ENCODE measurements at regions of chr6 and their contacts with region 1.

Region 1: GRCh38 chr6:108541838-108542759 is 18.6 kb upstream of the FOXO3 start:
- DNase-seq: peak; percentile 80
- ATAC-seq: peak; percentile 84
- H3K4me3 Mint-ChIP-seq: peak overlapping the region; percentile 26
- H3K27ac Mint-ChIP-seq: no peak overlapping the region
- H3K4me1 Mint-ChIP-seq: peaks cover 21% of the 10 kb centered on the region
- H3K27me3 Mint-ChIP-seq: peaks cover 4% of the 10 kb centered on the region

Region 2: GRCh38 chr6:108464418-108465093 is 77.5 kb before region 1 on chr6:
- CTCF ChIA-PET with region 1: no interaction called
- POLR2A ChIA-PET with region 1: no interaction called
- DNase-seq: no peak
- ATAC-seq: no peak
- H3K4me3 Mint-ChIP-seq: no peak overlapping the region
- H3K27ac Mint-ChIP-seq: no peak overlapping the region
- H3K4me1 Mint-ChIP-seq: no peaks in the 10 kb centered on the region
- H3K27me3 Mint-ChIP-seq: peaks cover 9% of the 10 kb centered on the region

Region 3: DNA sequence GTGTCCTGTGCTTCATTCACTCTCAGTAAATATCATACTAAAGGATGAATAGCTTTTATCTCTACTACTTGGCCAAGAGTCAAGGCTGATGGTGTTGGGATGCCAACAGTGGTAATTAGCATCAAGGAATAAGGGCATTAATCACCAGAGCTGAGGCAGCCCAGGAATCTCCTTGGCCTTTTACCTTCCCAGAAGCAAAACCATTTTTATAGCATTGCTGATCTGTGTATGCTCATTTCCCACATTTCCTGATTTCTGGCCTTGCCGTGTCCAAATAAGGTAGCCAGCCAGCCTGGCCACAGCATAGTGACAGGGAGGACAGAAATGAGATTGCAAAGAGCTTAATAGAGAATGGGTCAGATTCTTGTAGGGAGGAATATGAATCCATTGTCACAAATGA is 58.1 kb before region 1 on chr6:
- CTCF ChIA-PET with region 1: no interaction called
- POLR2A ChIA-PET with region 1: no interaction called
- DNase-seq: no peak
- ATAC-seq: no peak
- H3K4me3 Mint-ChIP-seq: no peak overlapping the region
- H3K27ac Mint-ChIP-seq: no peak overlapping the region
- H3K4me1 Mint-ChIP-seq: no peaks in the 10 kb centered on the region
- H3K27me3 Mint-ChIP-seq: no peaks in the 10 kb centered on the region

Region 4: GRCh38 chr6:108558372-108559096 is 16.4 kb after region 1 on chr6:
- CTCF ChIA-PET with region 1: interaction called, 14 read pairs
- POLR2A ChIA-PET with region 1: interaction called, 3 read pairs
- DNase-seq: peak; percentile 98
- ATAC-seq: peak; percentile 73
- H3K4me3 Mint-ChIP-seq: peak overlapping the region; percentile 94
- H3K27ac Mint-ChIP-seq: peak overlapping the region; percentile 96
- H3K4me1 Mint-ChIP-seq: peaks cover 29% of the 10 kb centered on the region
- H3K27me3 Mint-ChIP-seq: peaks cover 17% of the 10 kb centered on the region

Region 5: GRCh38 chr6:108592371-108593337 is 50.6 kb after region 1 on chr6:
- CTCF ChIA-PET with region 1: no interaction called
- POLR2A ChIA-PET with region 1: no interaction called
- DNase-seq: peak; percentile 84
- ATAC-seq: peak; percentile 96
- H3K4me3 Mint-ChIP-seq: no peak overlapping the region
- H3K27ac Mint-ChIP-seq: peak overlapping the region; percentile 44
- H3K4me1 Mint-ChIP-seq: peaks cover 41% of the 10 kb centered on the region
- H3K27me3 Mint-ChIP-seq: no peaks in the 10 kb centered on the region

Region 6: DNA sequence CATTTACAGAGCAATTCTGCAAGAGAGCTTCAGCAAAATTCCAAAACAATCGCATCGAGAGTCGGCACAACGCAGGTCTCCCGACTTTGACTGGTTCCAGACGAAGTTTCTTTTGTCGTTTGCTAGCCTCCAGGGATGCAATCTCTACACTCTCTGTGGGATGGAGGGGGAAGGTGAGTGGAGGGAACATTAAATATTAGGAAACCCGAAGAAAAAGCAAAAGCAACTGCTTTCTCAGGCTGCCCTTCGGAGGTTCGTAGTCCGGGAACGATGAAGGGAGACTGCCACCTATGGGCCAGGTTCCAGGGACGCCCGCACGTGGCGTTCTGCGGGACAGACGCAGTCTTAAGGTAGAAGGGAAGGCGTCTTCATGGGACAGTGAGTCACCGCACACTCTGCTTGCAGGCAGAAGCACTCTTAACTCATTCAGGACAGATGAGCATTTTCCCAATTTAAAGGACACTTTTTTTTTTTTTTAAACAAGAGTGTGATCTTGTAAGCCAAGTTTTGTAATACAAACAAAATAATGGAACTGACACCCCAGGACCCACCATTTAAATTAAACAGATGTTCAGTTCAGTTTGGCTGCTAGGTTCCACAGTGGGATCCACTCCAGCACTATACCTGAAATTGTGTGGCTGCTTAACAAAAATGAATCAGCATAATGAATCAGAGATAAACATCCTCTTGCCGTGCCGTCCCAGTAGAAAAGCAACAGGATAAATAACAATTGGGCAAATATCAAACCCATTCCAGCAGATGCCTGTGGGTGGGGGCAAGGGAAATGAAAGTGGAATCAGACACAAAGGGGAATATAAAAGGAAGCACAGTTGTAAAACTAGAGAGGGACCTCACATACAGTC is 240.3 kb after region 1 on chr6:
- CTCF ChIA-PET with region 1: interaction called, 17 read pairs
- POLR2A ChIA-PET with region 1: no interaction called
- DNase-seq: peak; percentile 88
- ATAC-seq: peak; percentile 99
- H3K4me3 Mint-ChIP-seq: peak overlapping the region; percentile 74
- H3K27ac Mint-ChIP-seq: no peak overlapping the region
- H3K4me1 Mint-ChIP-seq: peaks cover 11% of the 10 kb centered on the region
- H3K27me3 Mint-ChIP-seq: peaks cover 32% of the 10 kb centered on the region

Region 7: GRCh38 chr6:108798670-108799353 is 256.7 kb after region 1 on chr6:
- CTCF ChIA-PET with region 1: interaction called, 10 read pairs
- POLR2A ChIA-PET with region 1: interaction called, 3 read pairs
- DNase-seq: peak; percentile 82
- ATAC-seq: peak; percentile 100
- H3K4me3 Mint-ChIP-seq: peak overlapping the region; percentile 70
- H3K27ac Mint-ChIP-seq: peak overlapping the region; percentile 94
- H3K4me1 Mint-ChIP-seq: peaks cover 42% of the 10 kb centered on the region
- H3K27me3 Mint-ChIP-seq: no peaks in the 10 kb centered on the region

Region 8: DNA sequence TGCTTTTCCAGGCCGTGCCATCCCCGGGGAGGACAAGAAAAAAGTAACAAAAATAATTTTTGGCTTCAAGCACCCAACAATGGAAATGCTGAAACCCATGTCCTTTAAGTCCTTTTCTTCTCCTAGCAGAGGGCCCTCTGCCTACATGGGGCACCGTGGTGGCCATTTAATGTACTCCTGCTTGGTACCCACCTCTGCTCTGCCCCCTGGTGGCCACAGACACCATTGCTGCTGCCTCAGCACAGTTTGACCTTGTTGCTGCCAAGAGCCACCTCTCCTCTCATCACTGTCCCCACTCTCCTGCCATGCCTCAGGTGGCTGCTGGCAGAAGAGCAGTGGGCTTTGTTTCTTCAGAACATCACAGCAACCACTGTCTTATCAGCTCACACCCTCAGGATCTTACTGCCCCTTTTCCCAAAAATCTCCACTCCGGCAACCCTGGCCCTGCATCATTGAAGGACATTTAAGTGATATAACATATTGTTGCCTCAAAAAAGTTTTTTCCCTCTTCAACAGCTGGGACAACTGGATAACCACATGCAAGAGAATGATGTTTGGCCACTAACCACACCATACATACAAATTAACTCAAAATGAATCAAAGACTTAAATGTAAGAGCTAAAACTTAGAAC is 293.2 kb after region 1 on chr6:
- CTCF ChIA-PET with region 1: interaction called, 21 read pairs
- POLR2A ChIA-PET with region 1: no interaction called
- DNase-seq: peak; percentile 91
- ATAC-seq: peak; percentile 96
- H3K4me3 Mint-ChIP-seq: no peak overlapping the region
- H3K27ac Mint-ChIP-seq: no peak overlapping the region
- H3K4me1 Mint-ChIP-seq: peaks cover 45% of the 10 kb centered on the region
- H3K27me3 Mint-ChIP-seq: peaks cover 14% of the 10 kb centered on the region